ENCODE measurements at regions of chrX and their contacts with region 1.

Region 1: GRCh38 chrX:16436348-16437188 is 213.4 kb upstream of the S100G start:
- DNase-seq: peak; percentile 75
- ATAC-seq: peak; percentile 94
- H3K4me3 ChIP-seq: no peak overlapping the region
- H3K27ac ChIP-seq: no peak overlapping the region
- H3K4me1 ChIP-seq: no peaks in the 10 kb centered on the region
- H3K27me3 ChIP-seq: peaks cover 1% of the 10 kb centered on the region; the same call in 1 of the 2 replicates
- CTCF ChIP-seq: peak; percentile 70
- POLR2A ChIP-seq: no peak
- RAD21 ChIP-seq: peak; percentile 65

Region 2: DNA sequence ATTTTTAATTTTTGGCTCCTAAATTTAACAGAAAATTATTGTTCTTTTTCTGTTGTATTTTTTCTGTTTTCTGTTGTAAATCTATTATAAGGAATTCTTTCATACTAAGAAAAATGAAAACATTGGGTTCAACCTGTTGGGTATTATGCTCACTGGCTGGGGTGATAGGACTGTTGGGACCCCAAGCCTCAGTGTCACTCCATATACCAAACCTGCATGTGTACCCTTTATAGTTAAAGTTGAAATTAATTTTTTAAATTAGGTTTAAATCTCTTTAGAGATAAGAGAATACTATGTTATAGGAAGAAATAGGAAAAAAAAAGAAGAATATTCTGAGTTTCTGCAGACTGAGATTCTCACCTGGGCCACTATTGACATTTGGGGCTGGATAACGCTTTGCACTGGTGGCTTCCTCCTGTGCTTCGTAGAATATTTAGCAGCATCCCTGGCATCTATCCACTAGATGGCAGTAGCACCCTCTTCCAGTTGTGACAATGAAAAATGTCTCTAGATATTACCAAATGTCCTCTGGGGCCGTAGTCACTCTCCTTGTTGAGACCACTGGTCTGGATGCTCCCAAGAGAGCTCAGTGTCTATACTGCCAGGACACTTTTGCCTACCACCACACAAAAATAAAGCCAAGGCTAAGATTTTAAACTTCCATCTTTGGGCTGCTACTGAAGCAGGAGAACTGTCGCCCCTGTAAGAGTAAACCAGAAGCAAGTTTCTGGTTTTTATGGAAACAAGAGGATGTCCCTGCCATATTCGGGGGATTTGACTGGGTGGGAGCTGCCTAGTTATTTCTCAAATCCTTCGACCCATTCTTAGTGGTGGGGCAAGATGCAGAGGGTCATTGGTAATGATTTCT is 749.5 kb before region 1 on chrX:
- CTCF ChIA-PET with region 1: no interaction called
- POLR2A ChIA-PET with region 1: no interaction called
- dilution Hi-C with region 1: no loop called
- in situ Hi-C with region 1: no loop called
- intact Hi-C with region 1: loop called (anchors 5 kb)
- DNase-seq: peak; percentile 61
- ATAC-seq: peak; percentile 91
- H3K4me3 ChIP-seq: no peak overlapping the region
- H3K27ac ChIP-seq: no peak overlapping the region
- H3K4me1 ChIP-seq: no peaks in the 10 kb centered on the region
- H3K27me3 ChIP-seq: no peaks in the 10 kb centered on the region
- CTCF ChIP-seq: peak; percentile 83
- POLR2A ChIP-seq: no peak
- RAD21 ChIP-seq: peak; percentile 67

Region 3: DNA sequence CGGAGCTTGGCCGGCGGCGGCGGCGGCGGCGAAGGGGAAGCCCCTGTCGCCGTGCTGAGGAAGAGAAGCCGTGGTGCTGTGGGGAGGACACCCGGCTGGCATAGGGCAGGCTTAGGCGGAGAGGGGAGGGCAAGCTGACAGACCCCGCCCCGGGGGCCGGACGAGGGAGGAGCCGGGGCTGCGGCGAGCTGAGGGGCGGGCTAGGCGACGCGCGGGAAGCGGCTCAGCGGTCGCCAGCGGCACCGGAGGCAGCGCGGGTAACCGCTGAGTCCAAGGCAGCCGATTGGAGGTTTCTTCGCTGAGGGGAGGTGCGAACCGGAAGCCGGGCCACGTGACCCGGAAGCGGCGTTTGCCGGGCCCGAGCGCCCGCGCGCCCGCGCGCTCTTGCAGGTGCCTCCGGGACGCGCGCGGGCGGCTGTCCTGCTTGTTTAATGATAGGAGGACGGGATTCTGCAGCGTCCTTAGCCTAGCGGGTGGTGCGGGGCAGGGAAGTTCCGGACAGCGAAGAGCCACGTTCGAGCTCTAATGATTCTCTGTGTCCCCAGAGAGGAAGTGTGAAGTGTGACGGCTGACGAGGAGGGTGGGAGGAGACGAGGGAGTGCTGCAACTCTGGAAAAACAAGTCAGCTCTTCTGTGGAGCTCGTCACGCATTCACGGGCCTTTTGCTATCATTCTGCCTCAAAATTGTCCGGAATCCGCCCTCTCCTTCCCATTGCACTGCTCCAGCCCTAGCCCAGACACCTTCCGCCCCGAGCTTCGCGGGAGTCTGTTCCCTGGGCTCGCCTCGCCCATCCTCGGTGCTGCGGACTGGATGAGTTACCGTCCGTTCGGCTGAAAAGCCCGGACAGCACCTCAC is 581.6 kb before region 1 on chrX and contains the start of gene AP1S2:
- CTCF ChIA-PET with region 1: no interaction called
- POLR2A ChIA-PET with region 1: no interaction called
- dilution Hi-C with region 1: no loop called
- in situ Hi-C with region 1: no loop called
- intact Hi-C with region 1: loop called (anchors 5 kb)
- DNase-seq: peak; percentile 92
- ATAC-seq: peak; percentile 99
- H3K4me3 ChIP-seq: peak within 1 kb of the TSS; percentile 60
- H3K27ac ChIP-seq: peak within 1 kb of the TSS; percentile 32
- H3K4me1 ChIP-seq: no peaks in the 10 kb centered on the region
- H3K27me3 ChIP-seq: peaks cover 4% of the 10 kb centered on the region; the same call in 1 of the 2 replicates
- CTCF ChIP-seq: no peak
- POLR2A ChIP-seq: no peak
- RAD21 ChIP-seq: no peak
- total RNA-seq, gene AP1S2: 28.3 and 117 TPM in 2 replicates

Region 4: DNA sequence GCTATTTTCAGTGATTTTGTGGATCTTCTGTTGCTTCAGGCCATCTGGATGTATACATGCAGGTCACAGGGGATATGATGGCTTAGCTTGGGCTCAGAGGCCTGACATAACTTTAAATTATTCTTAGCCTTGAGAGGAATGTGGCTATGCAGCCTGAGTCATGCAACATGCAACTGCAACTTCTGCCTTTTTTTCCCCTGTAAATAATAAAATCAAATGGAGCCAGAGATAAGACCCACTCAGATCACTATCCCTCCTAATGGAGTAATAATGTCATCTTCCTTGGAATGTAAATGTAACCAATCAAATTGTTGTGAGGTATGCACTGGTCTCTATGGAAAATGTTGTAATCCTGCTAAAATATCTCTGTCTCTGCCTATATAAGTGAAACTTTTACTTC is 214.4 kb before region 1 on chrX:
- CTCF ChIA-PET with region 1: no interaction called
- POLR2A ChIA-PET with region 1: no interaction called
- dilution Hi-C with region 1: no loop called
- in situ Hi-C with region 1: no loop called
- intact Hi-C with region 1: loop called (anchors 10 kb)
- DNase-seq: peak; percentile 82
- ATAC-seq: peak; percentile 86
- H3K4me3 ChIP-seq: no peak overlapping the region
- H3K27ac ChIP-seq: no peak overlapping the region
- H3K4me1 ChIP-seq: peaks cover 7% of the 10 kb centered on the region
- H3K27me3 ChIP-seq: no peaks in the 10 kb centered on the region
- CTCF ChIP-seq: no peak
- POLR2A ChIP-seq: no peak
- RAD21 ChIP-seq: no peak

Region 5: DNA sequence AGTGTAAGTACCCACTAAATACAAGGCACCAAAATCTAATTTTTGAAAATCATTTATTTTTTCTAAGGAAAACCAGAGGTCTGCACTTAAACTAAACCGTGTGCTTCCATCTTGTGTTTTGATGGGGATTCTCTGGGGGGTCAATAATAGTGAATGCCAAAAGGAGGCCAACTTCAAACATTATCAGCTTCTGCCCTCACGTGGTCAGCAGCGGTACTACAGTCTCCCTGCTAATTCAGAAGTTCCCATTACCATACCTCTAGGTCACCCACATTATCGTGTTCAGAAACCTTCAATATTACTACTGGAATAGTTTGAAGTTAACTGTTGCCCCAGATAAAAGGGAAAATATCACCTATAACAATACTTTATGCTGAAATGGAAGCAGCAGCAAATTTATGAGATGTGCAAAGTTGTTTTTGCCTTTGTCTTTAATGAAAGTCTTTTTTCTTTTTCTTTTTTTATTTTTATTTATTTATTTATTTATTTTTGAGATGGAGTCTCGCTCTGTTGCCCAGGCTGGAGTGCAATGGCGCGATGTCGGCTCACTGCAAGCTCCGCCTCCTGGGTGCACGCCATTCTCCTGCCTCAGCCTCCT is 258.6 kb after region 1 on chrX:
- CTCF ChIA-PET with region 1: no interaction called
- POLR2A ChIA-PET with region 1: no interaction called
- dilution Hi-C with region 1: no loop called
- in situ Hi-C with region 1: no loop called
- intact Hi-C with region 1: loop called (anchors 1 kb)
- DNase-seq: peak; percentile 65
- ATAC-seq: peak; percentile 98
- H3K4me3 ChIP-seq: no peak overlapping the region
- H3K27ac ChIP-seq: no peak overlapping the region
- H3K4me1 ChIP-seq: no peaks in the 10 kb centered on the region
- H3K27me3 ChIP-seq: no peaks in the 10 kb centered on the region
- CTCF ChIP-seq: peak; percentile 82
- POLR2A ChIP-seq: no peak
- RAD21 ChIP-seq: peak; percentile 78